CD8-positive, alpha-beta T cell (primary cell): ENCODE measurements at regions of chr6 and their contacts with region 1.

Region 1: GRCh38 chr6:108565893-108566292 is 5.2 kb downstream of the FOXO3 start:
- DNase-seq: peak in 2 of 9 experiments; percentile 35 to 57
- ATAC-seq: no peak
- H3K4me3 ChIP-seq: no peak overlapping the region
- H3K4me3 Mint-ChIP-seq: peak overlapping the region; percentile 12
- H3K27ac ChIP-seq: peak overlapping the region in 1 of 2 experiments; percentile 61
- H3K27ac Mint-ChIP-seq: peak overlapping the region; percentile 75
- H3K4me1 ChIP-seq: peaks cover 44% of the 10 kb centered on the region
- H3K4me1 Mint-ChIP-seq: peaks cover 73% of the 10 kb centered on the region
- H3K27me3 ChIP-seq: no peaks in the 10 kb centered on the region
- H3K27me3 Mint-ChIP-seq: no peaks in the 10 kb centered on the region
- CTCF ChIP-seq: no peak

Region 2: GRCh38 chr6:108001696-108002231 is 564.1 kb before region 1 on chr6:
- CTCF ChIA-PET with region 1: no interaction called
- POLR2A ChIA-PET with region 1: no interaction called
- intact Hi-C with region 1: no loop called
- DNase-seq: no peak
- ATAC-seq: no peak
- H3K4me3 ChIP-seq: no peak overlapping the region
- H3K4me3 Mint-ChIP-seq: no peak overlapping the region
- H3K27ac ChIP-seq: no peak overlapping the region
- H3K27ac Mint-ChIP-seq: no peak overlapping the region
- H3K4me1 ChIP-seq: no peaks in the 10 kb centered on the region
- H3K4me1 Mint-ChIP-seq: no peaks in the 10 kb centered on the region
- H3K27me3 ChIP-seq: no peaks in the 10 kb centered on the region
- H3K27me3 Mint-ChIP-seq: no peaks in the 10 kb centered on the region
- CTCF ChIP-seq: no peak

Region 3: GRCh38 chr6:108476847-108477430 is 89.0 kb before region 1 on chr6:
- CTCF ChIA-PET with region 1: no interaction called
- POLR2A ChIA-PET with region 1: no interaction called
- intact Hi-C with region 1: no loop called
- DNase-seq: no peak
- ATAC-seq: no peak
- H3K4me3 ChIP-seq: no peak overlapping the region
- H3K4me3 Mint-ChIP-seq: no peak overlapping the region
- H3K27ac ChIP-seq: no peak overlapping the region
- H3K27ac Mint-ChIP-seq: no peak overlapping the region
- H3K4me1 ChIP-seq: no peaks in the 10 kb centered on the region
- H3K4me1 Mint-ChIP-seq: no peaks in the 10 kb centered on the region
- H3K27me3 ChIP-seq: no peaks in the 10 kb centered on the region
- H3K27me3 Mint-ChIP-seq: no peaks in the 10 kb centered on the region
- CTCF ChIP-seq: no peak

Region 4: GRCh38 chr6:108581237-108581931 is 15.5 kb after region 1 on chr6:
- CTCF ChIA-PET with region 1: interaction called, 3 read pairs
- POLR2A ChIA-PET with region 1: interaction called, 7 read pairs
- intact Hi-C with region 1: loop called in 1 of 2 experiments (anchors 1 kb)
- DNase-seq: peak in 1 of 9 experiments; percentile 34
- ATAC-seq: peak; percentile 26
- H3K4me3 ChIP-seq: no peak overlapping the region
- H3K4me3 Mint-ChIP-seq: peak overlapping the region; percentile 67
- H3K27ac ChIP-seq: no peak overlapping the region
- H3K27ac Mint-ChIP-seq: peak overlapping the region; percentile 65
- H3K4me1 ChIP-seq: peaks cover 26% of the 10 kb centered on the region
- H3K4me1 Mint-ChIP-seq: peaks cover 75% of the 10 kb centered on the region
- H3K27me3 ChIP-seq: no peaks in the 10 kb centered on the region
- H3K27me3 Mint-ChIP-seq: no peaks in the 10 kb centered on the region
- CTCF ChIP-seq: no peak

Region 5: DNA sequence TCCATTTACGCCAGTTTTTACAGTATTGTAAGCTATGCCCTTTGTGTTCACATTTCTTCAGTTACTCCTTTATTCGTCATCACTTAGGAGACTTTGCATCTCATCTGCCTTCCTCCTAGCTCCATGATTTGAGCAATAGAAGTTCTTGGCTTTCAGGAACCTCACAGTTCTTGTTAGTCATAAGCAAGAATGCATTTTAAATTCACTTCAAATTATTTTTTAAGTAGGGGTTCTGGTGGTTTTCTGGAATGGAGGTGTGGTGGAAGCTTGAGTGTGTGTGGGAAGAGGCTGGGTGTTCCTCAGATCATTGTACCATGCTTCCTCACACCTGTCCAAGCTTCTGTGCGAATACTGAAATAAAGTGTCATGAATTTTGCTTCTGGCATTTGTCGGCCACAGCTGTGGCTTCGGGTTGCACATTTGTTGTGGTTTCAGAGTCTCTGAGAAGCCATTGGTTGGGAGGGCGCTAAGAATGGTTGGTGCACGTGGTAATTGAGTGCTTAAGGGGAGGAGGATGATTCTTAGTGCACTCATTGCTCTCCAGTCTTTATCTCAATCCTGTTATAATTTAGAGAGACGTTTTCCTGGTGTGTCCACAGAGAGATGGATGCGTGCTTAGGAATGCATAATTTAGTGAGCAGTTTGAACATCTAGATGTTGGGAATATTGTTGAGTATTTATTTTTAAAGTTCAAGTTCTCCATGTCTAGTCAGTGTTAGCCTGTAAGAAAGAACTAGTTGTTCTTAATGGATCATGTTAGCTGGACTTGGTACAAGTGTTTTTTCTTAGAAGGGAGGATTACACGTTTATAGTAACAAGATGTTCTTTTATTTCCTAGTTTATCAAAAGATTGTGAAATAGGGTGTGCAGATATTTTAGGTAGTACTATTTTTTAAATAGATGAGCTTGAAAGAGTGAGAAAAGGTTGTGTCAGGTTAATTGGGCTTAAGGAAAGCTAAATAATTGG is 26.8 kb after region 1 on chr6:
- CTCF ChIA-PET with region 1: no interaction called
- POLR2A ChIA-PET with region 1: no interaction called
- intact Hi-C with region 1: loop called in 1 of 2 experiments (anchors 2 kb)
- DNase-seq: peak; percentile 14 to 84 (median 53)
- ATAC-seq: peak; percentile 93
- H3K4me3 ChIP-seq: no peak overlapping the region
- H3K4me3 Mint-ChIP-seq: peak overlapping the region; percentile 10
- H3K27ac ChIP-seq: no peak overlapping the region
- H3K27ac Mint-ChIP-seq: peak overlapping the region; percentile 32
- H3K4me1 ChIP-seq: peaks cover 35% of the 10 kb centered on the region
- H3K4me1 Mint-ChIP-seq: peaks cover 70% of the 10 kb centered on the region
- H3K27me3 ChIP-seq: no peaks in the 10 kb centered on the region
- H3K27me3 Mint-ChIP-seq: no peaks in the 10 kb centered on the region
- CTCF ChIP-seq: no peak

Region 6: GRCh38 chr6:108630050-108630714 is 64.3 kb after region 1 on chr6:
- CTCF ChIA-PET with region 1: no interaction called
- POLR2A ChIA-PET with region 1: no interaction called
- intact Hi-C with region 1: loop called in 1 of 2 experiments (anchors 5 kb)
- DNase-seq: peak in 2 of 9 experiments; percentile 17 to 48
- ATAC-seq: peak; percentile 87
- H3K4me3 ChIP-seq: no peak overlapping the region
- H3K4me3 Mint-ChIP-seq: no peak overlapping the region
- H3K27ac ChIP-seq: no peak overlapping the region
- H3K27ac Mint-ChIP-seq: peak overlapping the region; percentile 29
- H3K4me1 ChIP-seq: peaks cover 19% of the 10 kb centered on the region
- H3K4me1 Mint-ChIP-seq: peaks cover 75% of the 10 kb centered on the region
- H3K27me3 ChIP-seq: no peaks in the 10 kb centered on the region
- H3K27me3 Mint-ChIP-seq: no peaks in the 10 kb centered on the region
- CTCF ChIP-seq: no peak